ENCODE measurements at regions of chr6 and their contacts with region 1.

Region 1: GRCh38 chr6:41602864-41603608 is 35.2 kb upstream of the MDFI start:
- DNase-seq: peak; percentile 65 to 94
- H3K4me3 ChIP-seq: no peak overlapping the region
- CTCF ChIP-seq: peak in 1 of 3 donors; percentile 67
- POLR2A ChIP-seq: no peak

Region 2: DNA sequence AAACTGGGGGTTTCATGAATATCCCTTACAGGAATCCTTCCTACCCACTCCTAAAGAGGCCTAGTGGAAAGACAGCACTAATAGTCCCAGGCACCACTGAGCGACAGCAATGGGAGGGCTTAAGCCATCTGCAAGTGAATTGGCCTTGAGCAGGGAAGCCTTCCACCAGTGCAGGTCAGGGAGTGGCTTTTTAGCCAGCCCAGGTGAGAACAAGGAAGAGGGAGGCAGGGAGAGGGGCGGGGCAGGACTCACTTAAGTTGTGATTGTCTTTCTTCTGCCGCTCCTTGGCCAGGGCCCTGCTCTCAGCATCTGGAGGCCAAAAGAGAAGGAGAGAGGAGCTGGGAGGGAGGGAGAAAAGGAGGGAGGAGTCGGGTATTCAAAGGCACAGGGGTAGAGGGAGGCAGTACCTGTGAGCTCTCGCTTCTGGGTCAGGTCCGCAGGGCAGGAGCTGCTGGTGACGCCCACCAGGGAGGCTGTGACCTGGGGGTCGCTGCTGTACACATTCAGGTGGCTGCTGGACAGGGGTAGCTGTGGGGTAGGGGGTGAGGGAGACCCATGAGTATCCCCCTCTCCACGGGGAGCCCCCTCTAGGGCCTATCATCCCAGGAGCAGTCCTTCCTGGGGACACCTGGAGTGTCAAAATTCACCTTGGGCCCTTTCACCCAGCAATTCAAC is 84.6 kb after region 1 on chr6:
- intact Hi-C with region 1: loop called (anchors 2 kb)
- DNase-seq: no peak
- H3K4me3 ChIP-seq: no peak overlapping the region
- CTCF ChIP-seq: no peak
- POLR2A ChIP-seq: no peak